Right ventricle myocardium inferior (tissue), 1 donor: ENCODE measurements at regions of chr11 and their contacts with region 1.

Region 1: DNA sequence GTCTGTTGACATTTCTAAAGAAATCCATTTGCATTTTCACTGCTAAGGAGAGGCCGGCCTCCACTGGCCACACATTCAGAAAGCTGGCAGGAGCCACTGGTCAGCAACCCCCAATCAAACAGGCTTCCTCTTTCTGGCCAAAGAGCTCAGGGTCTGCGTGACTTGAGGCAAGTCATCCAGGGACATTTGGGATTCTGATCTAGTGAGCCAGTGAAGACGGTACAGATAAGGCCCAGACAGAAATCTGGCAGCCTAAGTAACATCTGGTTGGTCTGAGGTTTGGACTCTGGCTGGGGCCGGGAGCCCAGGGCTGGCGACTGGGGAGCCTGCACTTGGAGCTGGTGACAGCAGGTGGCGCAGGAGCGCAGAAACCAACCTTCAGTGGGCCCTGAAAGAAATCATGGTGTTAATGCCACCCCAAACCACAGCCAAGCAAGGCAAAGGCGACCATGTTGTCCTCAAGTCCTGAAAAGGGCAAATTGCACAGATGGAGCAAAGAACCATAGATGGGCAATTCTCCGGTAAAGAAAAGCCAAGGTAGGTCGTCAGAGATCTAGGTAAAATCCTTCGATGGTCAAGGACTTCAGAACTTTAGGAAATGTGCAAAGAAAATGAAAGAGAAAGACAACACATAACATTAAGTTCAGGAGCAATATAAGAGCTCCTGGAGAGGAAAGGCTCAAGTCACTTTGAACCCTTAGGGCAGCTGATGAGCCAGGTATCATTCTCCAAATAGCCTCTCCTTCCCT is 99.4 kb upstream of the BLID start:
- DNase-seq: peak; percentile 87
- ATAC-seq: peak; percentile 98

Region 2: GRCh38 chr11:121810291-121810690 is 405.1 kb before region 1 on chr11:
- intact Hi-C with region 1: no loop called
- DNase-seq: no peak
- ATAC-seq: no peak

Region 3: GRCh38 chr11:122293296-122294023 is 78.0 kb after region 1 on chr11:
- intact Hi-C with region 1: loop called (anchors 5 kb)
- DNase-seq: no peak
- ATAC-seq: peak; percentile 56

Region 4: GRCh38 chr11:122367809-122368231 is 152.4 kb after region 1 on chr11:
- intact Hi-C with region 1: loop called (anchors 10 kb)
- DNase-seq: no peak
- ATAC-seq: peak; percentile 81